Right ventricle myocardium inferior (tissue), 1 donor: ENCODE measurements at regions of chr19 and their contacts with region 1.

Region 1: DNA sequence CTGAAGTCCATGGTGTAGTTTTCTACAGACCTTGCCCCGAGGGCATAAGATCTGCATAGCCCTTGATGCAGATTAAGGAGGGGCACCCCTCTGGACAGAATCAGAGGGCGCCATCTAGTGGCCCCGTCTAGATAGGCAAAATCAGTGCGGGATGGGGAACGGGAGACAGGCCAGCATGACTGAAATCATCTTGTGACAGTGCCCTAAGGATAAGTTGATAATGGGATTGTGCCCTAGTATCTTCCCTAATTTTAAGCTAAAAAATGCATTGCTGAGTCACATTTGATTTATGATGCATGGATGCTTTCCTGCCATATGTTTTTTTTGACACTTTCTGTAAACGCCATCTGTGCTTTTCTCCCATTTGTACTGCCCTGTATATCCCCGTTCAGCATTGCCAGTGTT is 19.0 kb upstream of the GPI start:
- DNase-seq: no peak
- ATAC-seq: peak; percentile 69

Region 2: GRCh38 chr19:34220472-34221063 is 125.4 kb before region 1 on chr19:
- intact Hi-C with region 1: loop called (anchors 5 kb)
- DNase-seq: no peak
- ATAC-seq: no peak